SK-N-SH (cell line): ENCODE measurements at regions of chr5 and their contacts with region 1.

Region 1: DNA sequence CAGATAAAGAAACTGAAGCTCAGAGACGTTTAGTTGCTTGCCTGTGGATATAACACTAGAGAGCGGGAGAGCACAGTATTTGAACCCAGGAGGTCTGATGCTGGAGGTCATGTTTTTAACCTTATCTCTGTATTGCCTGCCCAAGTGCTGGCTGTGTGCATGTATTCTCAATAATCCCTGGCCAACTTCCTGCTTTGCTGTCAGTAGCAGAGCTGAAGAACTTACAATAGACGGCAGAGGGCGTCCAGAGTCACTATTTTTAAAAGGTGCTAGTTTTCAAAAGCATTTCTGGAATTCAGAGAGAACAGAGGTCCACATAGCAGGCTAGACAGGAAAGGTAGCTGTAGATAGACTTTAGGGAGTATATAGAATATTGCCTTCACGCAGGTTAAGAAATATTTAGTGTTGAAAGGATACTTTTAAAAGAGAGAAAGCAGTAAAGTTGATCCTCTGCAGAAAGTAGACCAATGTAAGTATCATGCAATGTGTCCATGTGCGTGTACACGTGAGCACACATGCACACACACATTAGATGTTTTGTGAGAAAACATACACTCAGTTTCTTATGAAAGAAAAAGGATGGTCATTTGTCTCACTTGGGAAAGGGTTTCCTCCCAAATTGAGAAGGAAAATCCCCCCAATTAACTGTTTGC is 46.3 kb downstream of the PTCD2 start:
- DNase-seq: peak; percentile 53
- H3K4me3 ChIP-seq: no peak overlapping the region
- H3K27ac ChIP-seq: peak overlapping the region; percentile 26 to 36; a peak in 2 of 4 replicates
- H3K4me1 ChIP-seq: peaks cover 10 to 19% of the 10 kb centered on the region in 2 experiments; a peak in 3 of 4 replicates
- H3K27me3 ChIP-seq: no peaks in the 10 kb centered on the region
- CTCF ChIP-seq: peak; percentile 88
- EP300 ChIP-seq: no peak
- RAD21 ChIP-seq: peak; percentile 94

Region 2: GRCh38 chr5:72268753-72269410 is 97.6 kb before region 1 on chr5:
- CTCF ChIA-PET with region 1: no interaction called
- POLR2A ChIA-PET with region 1: no interaction called
- DNase-seq: peak; percentile 36
- H3K4me3 ChIP-seq: no peak overlapping the region; a peak in 1 of 4 replicates
- H3K27ac ChIP-seq: no peak overlapping the region; a peak in 2 of 4 replicates
- H3K4me1 ChIP-seq: peaks cover 5 to 16% of the 10 kb centered on the region in 2 experiments; a peak in 3 of 4 replicates
- H3K27me3 ChIP-seq: no peaks in the 10 kb centered on the region
- CTCF ChIP-seq: peak; percentile 73
- EP300 ChIP-seq: no peak
- RAD21 ChIP-seq: peak; percentile 58

Region 3: DNA sequence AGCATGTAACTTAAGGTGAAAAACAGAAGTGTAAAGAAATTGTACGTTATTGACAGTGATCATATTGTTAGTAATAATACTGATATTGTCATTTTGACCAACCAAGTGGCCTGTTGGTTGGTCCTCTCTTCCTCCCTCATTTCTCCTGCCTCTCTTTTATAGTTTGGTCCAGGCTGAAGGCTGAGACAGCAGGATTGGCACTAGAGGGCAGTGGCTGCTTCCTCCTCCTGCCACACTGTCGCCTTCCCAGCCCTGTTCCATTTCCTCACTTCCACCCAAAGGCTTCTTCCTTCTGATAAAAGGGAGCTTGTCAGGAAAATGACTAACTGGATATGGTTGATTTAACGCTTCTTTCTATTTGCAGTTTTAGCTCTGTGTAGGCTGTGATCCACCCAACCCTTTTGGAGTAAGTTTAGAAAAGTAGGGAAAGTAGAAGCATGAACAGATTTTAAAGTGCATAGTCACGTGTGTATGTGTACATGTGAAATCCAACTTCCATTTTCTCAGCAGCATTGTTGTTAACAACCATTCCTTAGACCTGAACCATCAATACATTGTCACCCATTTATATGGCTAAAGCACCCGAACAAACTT is 10.6 kb before region 1 on chr5:
- CTCF ChIA-PET with region 1: interaction called, 36 read pairs
- POLR2A ChIA-PET with region 1: no interaction called
- DNase-seq: peak; percentile 45
- H3K4me3 ChIP-seq: no peak overlapping the region
- H3K27ac ChIP-seq: no peak overlapping the region
- H3K4me1 ChIP-seq: peaks cover 0 to 8% of the 10 kb centered on the region in 2 experiments; a peak in 2 of 4 replicates
- H3K27me3 ChIP-seq: no peaks in the 10 kb centered on the region
- CTCF ChIP-seq: peak; percentile 59
- EP300 ChIP-seq: no peak
- RAD21 ChIP-seq: peak; percentile 76

Region 4: DNA sequence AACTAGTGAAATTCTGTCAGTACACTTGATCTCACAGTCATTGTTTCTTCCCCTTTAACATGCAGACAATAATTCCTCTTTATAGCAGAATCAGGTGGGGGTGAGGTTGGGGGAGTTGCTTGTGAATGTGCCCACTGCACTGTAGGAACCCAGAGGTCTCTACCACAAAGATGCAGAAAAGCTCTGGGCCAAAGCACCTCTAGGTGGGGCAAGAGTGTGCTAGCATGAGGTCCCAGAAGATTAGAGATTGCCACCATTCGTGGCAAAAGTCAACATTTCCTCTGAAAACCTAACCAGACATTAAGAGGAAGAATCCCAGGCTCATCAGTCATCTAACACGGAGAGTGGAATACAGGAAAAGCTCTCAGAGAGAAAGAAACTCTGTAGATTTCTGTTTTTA is 28.2 kb after region 1 on chr5:
- CTCF ChIA-PET with region 1: interaction called, 10 read pairs
- POLR2A ChIA-PET with region 1: no interaction called
- DNase-seq: no peak
- H3K4me3 ChIP-seq: no peak overlapping the region
- H3K27ac ChIP-seq: no peak overlapping the region
- H3K4me1 ChIP-seq: peaks cover 0 to 10% of the 10 kb centered on the region in 2 experiments; a peak in 2 of 4 replicates
- H3K27me3 ChIP-seq: no peaks in the 10 kb centered on the region
- CTCF ChIP-seq: peak; percentile 28; the same call in 1 of the 2 replicates
- EP300 ChIP-seq: no peak
- RAD21 ChIP-seq: peak; percentile 51

Region 5: DNA sequence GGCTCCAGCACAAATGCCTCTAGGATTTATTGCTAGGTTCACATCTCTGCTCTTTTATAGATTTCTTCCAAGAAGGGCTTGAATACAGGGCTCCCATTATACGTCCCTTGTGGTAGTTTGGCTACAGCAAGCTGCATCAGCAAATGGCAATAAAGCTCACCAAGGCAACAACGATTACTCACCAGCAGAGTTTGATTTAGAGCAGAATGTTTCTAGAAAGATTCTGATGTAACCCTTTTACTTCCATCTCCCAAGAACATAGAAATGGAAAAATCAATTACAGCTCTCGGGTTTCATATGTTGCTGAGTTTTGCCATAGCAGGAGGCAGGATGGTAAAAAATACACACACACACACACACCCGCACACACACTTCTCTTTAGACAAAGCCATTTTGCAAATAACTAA is 325.8 kb after region 1 on chr5:
- CTCF ChIA-PET with region 1: interaction called, 13 read pairs
- POLR2A ChIA-PET with region 1: interaction called, 4 read pairs
- DNase-seq: no peak
- H3K4me3 ChIP-seq: no peak overlapping the region
- H3K27ac ChIP-seq: peak overlapping the region in 1 of 2 experiments; percentile 99; a peak in 2 of 4 replicates
- H3K4me1 ChIP-seq: peaks cover 0 to 56% of the 10 kb centered on the region in 2 experiments; a peak in 2 of 4 replicates
- H3K27me3 ChIP-seq: no peaks in the 10 kb centered on the region; the same call in 1 of the 2 replicates
- CTCF ChIP-seq: no peak
- EP300 ChIP-seq: no peak
- RAD21 ChIP-seq: no peak

Region 6: DNA sequence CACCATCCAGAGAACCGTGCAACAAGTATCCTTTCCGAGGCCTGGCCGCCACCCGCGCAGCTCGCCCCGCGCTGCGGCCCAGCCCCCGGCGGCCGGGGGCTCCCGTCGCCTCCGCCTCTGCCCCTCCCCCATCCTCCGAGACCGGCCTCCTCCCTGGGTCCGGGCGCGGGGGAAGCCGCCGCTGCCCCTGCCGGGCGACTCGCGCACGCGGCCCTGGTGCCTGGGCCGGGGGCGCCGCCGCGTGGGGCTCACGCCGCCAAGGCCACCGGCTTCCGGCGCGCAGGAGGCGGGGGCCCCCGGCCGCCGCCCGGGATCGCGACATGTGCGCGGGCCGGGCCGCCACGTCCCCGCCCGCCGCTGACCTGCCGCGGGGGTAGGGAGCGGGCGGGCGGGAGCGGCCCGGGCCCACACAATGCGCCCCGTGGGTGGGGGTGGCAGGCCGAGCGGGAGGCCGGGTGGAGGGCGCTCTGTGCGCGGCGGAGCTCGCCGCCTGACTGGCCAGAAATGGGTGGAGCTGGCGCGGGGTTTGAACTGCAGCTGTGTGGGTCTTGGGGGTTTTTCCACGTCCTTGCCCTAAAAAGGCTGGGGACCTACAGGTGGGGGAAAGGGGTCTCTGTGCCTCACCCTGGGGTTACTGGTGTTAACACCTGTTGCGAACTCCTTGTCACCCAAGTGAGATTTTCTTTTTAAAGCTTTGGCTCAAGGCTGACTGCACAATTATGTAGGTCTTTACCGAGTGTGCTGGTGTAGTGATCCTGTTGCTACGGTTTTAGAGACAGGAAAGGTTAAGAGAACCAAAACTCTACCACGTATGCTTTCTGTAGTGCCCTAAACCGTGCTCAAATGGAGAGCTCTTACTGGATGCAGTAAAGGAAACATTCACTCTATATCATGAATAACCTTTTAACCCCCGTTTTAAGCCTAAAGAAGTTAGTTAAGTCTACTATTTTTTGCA is 482.3 kb after region 1 on chr5:
- CTCF ChIA-PET with region 1: interaction called, 13 read pairs
- POLR2A ChIA-PET with region 1: no interaction called
- DNase-seq: peak; percentile 90
- H3K4me3 ChIP-seq: peak overlapping the region; percentile 80 to 87
- H3K27ac ChIP-seq: peak overlapping the region; percentile 87 to 97
- H3K4me1 ChIP-seq: peaks cover 26 to 37% of the 10 kb centered on the region in 2 experiments
- H3K27me3 ChIP-seq: no peaks in the 10 kb centered on the region
- CTCF ChIP-seq: no peak
- EP300 ChIP-seq: no peak
- RAD21 ChIP-seq: no peak

Region 7: GRCh38 chr5:73103870-73104299 is 737.4 kb after region 1 on chr5:
- CTCF ChIA-PET with region 1: no interaction called
- POLR2A ChIA-PET with region 1: no interaction called
- DNase-seq: no peak
- H3K4me3 ChIP-seq: no peak overlapping the region
- H3K27ac ChIP-seq: no peak overlapping the region
- H3K4me1 ChIP-seq: no peaks in the 10 kb centered on the region
- H3K27me3 ChIP-seq: no peaks in the 10 kb centered on the region
- CTCF ChIP-seq: no peak
- EP300 ChIP-seq: no peak
- RAD21 ChIP-seq: no peak